OCI-LY7 (cell line): ENCODE measurements at regions of chr13 and their contacts with region 1.

Region 1: GRCh38 chr13:33099860-33100259 is 83.6 kb downstream of the KL start:
- DNase-seq: no peak
- H3K4me3 ChIP-seq: no peak overlapping the region
- H3K27ac ChIP-seq: no peak overlapping the region
- H3K4me1 ChIP-seq: no peaks in the 10 kb centered on the region
- CTCF ChIP-seq: no peak

Region 2: GRCh38 chr13:32031025-32031814 is 1068.6 kb before region 1 on chr13 and contains the start of gene FRY:
- CTCF ChIA-PET with region 1: no interaction called
- POLR2A ChIA-PET with region 1: no interaction called
- intact Hi-C with region 1: no loop called
- DNase-seq: peak; percentile 49
- H3K4me3 ChIP-seq: peak within 1 kb of the TSS; percentile 70
- H3K27ac ChIP-seq: no peak within 1 kb of the TSS
- H3K4me1 ChIP-seq: peaks cover 9% of the 10 kb centered on the region
- CTCF ChIP-seq: no peak
- total RNA-seq, gene FRY: 3.0 and 7.1 TPM in 2 replicates

Region 3: GRCh38 chr13:33087091-33087490 is 12.8 kb before region 1 on chr13:
- CTCF ChIA-PET with region 1: no interaction called
- POLR2A ChIA-PET with region 1: no interaction called
- intact Hi-C with region 1: no loop called
- DNase-seq: no peak
- H3K4me3 ChIP-seq: no peak overlapping the region
- H3K27ac ChIP-seq: no peak overlapping the region
- H3K4me1 ChIP-seq: no peaks in the 10 kb centered on the region
- CTCF ChIP-seq: no peak

Region 4: DNA sequence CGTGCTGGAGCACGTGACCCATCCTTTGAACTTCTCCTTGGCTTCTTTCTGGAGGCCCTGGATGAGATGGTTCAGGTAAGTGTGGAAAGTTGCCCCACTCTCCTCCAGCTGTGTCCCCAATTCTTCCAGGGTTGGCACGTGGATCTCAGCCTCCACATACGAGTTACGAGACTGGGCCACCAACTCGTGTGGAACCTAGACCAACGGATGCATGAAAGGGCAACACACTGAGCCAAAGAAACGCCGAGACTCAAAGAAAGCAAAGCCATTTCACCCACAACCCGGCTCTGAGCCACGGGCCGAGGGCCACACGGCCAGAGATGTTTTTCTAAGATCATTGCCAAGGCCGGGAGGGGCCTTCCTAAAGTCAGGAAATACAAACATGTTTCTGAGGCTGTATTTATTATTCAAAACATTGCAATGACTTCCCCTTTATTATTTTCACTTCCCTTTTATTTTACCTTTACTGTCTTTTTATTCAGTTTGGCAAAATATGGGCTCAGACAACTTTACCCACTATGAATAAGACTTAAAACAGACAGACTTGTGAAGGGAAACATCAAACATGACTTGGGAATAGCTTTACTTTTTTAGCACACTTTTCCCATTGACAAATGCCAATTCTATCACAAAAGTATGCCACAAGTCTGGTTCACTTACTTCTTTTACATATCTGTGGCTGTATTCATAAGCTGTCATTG is 11.0 kb after region 1 on chr13:
- CTCF ChIA-PET with region 1: no interaction called
- POLR2A ChIA-PET with region 1: interaction called, 10 read pairs
- intact Hi-C with region 1: no loop called
- DNase-seq: peak; percentile 32
- H3K4me3 ChIP-seq: no peak overlapping the region
- H3K27ac ChIP-seq: no peak overlapping the region
- H3K4me1 ChIP-seq: peaks cover 15% of the 10 kb centered on the region
- CTCF ChIP-seq: no peak

Region 5: DNA sequence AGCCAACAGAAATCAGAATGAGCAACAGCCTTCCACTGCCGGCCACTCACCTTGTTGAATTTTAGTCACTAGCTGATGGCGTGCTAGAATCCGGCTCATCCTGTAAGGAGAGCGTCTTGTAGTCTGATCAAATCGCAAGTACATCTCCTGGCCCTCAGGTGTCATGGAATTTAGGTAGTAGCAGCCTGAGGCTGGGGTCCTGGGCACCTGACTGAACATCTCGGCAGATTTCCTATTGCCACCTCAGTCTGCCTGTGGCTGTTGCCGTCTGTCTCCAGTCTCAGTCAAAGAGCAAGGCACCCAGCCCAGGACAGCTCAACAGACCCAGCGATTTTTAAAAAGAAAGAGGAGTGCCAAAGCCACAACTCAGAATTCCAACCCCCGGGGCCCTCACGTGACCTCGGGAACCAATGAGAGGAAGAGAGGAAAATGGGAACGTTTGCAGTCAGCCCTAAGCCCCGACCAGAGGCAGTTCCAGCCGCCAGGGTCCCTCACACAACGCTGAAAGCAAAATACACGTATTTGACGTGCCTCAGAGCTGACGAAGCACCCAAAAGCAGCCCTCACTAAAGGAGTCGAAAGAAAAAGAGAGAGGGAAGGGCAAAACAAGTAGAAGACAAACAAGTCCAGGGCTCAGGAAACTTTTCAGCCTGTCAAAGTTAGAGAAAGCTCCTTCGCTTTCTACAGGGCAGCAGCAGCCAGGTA is 185.7 kb after region 1 on chr13 and contains the start of gene STARD13:
- CTCF ChIA-PET with region 1: no interaction called
- POLR2A ChIA-PET with region 1: no interaction called
- intact Hi-C with region 1: no loop called
- DNase-seq: no peak
- H3K4me3 ChIP-seq: no peak within 1 kb of the TSS
- H3K27ac ChIP-seq: no peak within 1 kb of the TSS
- H3K4me1 ChIP-seq: no peaks in the 10 kb centered on the region
- CTCF ChIP-seq: no peak
- total RNA-seq, gene STARD13: 0.39 TPM in 1 of 2 replicates, not detected in the other

Region 6: GRCh38 chr13:33466262-33466661 is 366.4 kb after region 1 on chr13:
- CTCF ChIA-PET with region 1: no interaction called
- POLR2A ChIA-PET with region 1: no interaction called
- intact Hi-C with region 1: no loop called
- DNase-seq: no peak
- H3K4me3 ChIP-seq: no peak overlapping the region
- H3K27ac ChIP-seq: no peak overlapping the region
- H3K4me1 ChIP-seq: no peaks in the 10 kb centered on the region
- CTCF ChIP-seq: peak; percentile 35